Sigmoid colon (tissue), 7 donors: ENCODE measurements at regions of chr3 and their contacts with region 1.

Region 1: DNA sequence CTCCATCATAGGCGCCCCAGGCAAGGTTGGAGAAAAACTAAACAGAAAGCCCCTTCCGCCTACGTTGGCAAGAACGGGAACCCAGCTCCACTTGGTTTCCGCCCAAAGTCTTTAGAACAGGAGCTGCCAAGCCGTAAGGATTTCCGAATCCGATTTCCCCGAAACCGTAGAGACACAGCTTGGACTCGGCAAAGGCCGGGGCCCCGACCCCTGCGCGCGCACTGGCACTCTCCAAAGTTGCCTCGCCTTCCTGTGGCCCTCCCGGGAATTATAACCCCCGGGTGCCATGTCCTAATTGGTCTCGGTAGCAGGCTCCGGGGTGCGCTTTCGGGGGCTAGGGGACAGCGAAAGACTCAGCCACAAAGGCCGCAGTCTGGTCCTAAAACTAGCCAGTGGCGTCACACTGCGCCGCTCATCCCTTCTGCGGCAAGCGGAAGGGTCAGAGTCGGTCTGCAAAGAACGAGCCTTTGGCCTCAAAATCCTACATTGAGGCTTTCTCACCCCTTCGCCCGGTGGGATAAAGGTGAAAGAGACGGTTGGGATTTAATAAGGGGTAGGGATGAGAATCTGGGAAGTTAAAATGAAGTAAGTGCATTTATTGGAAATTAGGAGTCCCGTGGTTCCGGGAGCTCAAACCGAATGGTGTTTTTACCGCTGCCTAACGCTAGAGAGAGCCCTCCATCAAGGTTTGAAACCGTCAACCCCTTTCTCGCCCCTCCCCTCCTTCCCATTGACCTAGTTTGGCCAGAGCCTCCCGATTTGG is 6.8 kb downstream of the BCL6 start:
- DNase-seq: peak; percentile 97
- H3K4me3 ChIP-seq: peak overlapping the region; percentile 53 to 88 (median 68)
- H3K27ac ChIP-seq: peak overlapping the region; percentile 90 to 99 (median 96)
- H3K4me1 ChIP-seq: peaks cover 0 to 76% (median 43%) of the 10 kb centered on the region in 4 donors
- H3K27me3 ChIP-seq: no peaks in the 10 kb centered on the region
- CTCF ChIP-seq: peak; percentile 55 to 72 (median 64)
- EP300 ChIP-seq: peak in 2 of 4 donors; percentile 24 to 45
- POLR2A ChIP-seq: peak; percentile 23 to 34

Region 2: DNA sequence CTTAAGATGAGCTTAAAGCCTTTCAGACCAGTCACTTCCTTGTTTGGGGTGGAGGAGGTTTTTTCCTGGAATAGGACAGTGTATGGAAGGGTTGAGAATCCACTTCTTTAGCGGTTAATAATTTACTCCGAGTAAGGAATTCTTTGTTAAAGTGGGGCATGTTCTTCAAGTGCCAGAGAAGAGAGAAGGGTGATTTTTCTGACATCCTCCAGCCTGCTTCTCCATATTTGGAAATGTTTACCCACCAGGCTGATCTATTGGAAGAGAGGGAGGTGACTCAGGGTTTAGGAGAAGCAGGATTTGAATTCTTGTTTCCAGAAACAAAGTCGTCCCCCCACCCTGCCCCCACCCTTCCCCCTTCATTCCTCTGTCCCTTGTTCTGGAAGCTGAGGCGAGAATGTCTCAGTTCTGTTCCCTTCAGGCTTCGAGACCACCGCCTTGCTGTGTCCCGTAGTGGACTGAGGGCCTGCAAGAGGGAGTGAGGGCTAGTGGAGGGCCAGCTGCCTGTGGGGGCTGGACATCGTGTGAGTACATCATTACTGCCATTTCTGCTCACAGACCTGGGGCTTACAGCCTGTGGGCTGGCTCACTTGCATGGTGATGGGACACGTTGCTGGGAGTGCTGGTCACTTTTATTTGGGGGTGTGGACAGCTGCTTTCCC is 473.9 kb after region 1 on chr3:
- intact Hi-C with region 1: loop called (anchors 2 kb)
- DNase-seq: peak; percentile 83
- H3K4me3 ChIP-seq: peak overlapping the region; percentile 41 to 56 (median 47)
- H3K27ac ChIP-seq: peak overlapping the region; percentile 84 to 97 (median 93)
- H3K4me1 ChIP-seq: peaks cover 0 to 70% (median 54%) of the 10 kb centered on the region in 4 donors
- H3K27me3 ChIP-seq: no peaks in the 10 kb centered on the region
- CTCF ChIP-seq: no peak
- EP300 ChIP-seq: peak; percentile 66 to 92 (median 80)
- POLR2A ChIP-seq: peak; percentile 32 to 51

Region 3: DNA sequence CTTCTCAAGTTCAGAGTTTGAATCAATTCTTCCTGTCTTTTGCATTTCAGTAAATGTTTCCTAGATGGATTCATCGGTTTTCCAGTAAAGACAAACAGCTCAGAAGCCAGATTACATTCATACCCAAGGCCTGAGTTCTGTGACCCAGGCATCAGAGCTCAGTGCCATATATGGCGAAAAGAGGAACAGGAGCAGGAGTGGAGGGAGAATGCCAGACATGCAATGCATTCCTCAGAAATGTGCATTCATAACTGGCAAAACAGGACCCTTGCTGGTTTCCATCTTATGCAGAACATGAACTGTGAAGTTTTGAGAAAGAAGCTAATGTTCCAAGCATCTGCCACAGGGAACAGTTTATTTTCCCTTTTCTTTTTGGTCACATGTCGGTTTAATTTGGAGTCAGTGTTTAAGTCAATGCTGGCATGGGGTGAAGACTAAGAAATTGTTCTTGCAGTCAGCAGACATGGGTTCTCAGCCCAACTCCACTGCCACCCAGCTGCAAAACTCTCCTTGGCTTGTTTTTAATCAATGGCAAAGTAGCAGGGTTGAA is 532.0 kb after region 1 on chr3:
- intact Hi-C with region 1: loop called (anchors 2 kb)
- DNase-seq: no peak
- H3K4me3 ChIP-seq: no peak overlapping the region
- H3K27ac ChIP-seq: peak overlapping the region; percentile 88 to 94 (median 90)
- H3K4me1 ChIP-seq: peaks cover 0 to 97% (median 95%) of the 10 kb centered on the region in 4 donors
- H3K27me3 ChIP-seq: no peaks in the 10 kb centered on the region
- CTCF ChIP-seq: no peak
- EP300 ChIP-seq: peak in 3 of 4 donors; percentile 41 to 93 (median 77)
- POLR2A ChIP-seq: no peak

Region 4: GRCh38 chr3:188780193-188781147 is 1042.0 kb after region 1 on chr3:
- intact Hi-C with region 1: loop called (anchors 5 kb)
- DNase-seq: peak; percentile 74
- H3K4me3 ChIP-seq: no peak overlapping the region
- H3K27ac ChIP-seq: peak overlapping the region; percentile 55 to 77 (median 64)
- H3K4me1 ChIP-seq: peaks cover 0 to 67% (median 51%) of the 10 kb centered on the region in 4 donors
- H3K27me3 ChIP-seq: no peaks in the 10 kb centered on the region
- CTCF ChIP-seq: no peak
- EP300 ChIP-seq: peak; percentile 17 to 86 (median 64)
- POLR2A ChIP-seq: no peak

Region 5: GRCh38 chr3:188863999-188864406 is 1125.5 kb after region 1 on chr3:
- intact Hi-C with region 1: loop called (anchors 10 kb)
- DNase-seq: no peak
- H3K4me3 ChIP-seq: no peak overlapping the region
- H3K27ac ChIP-seq: peak overlapping the region; percentile 15 to 63 (median 39)
- H3K4me1 ChIP-seq: peaks cover 0 to 58% (median 36%) of the 10 kb centered on the region in 4 donors
- H3K27me3 ChIP-seq: no peaks in the 10 kb centered on the region
- CTCF ChIP-seq: no peak
- EP300 ChIP-seq: peak in 1 of 4 donors; percentile 11
- POLR2A ChIP-seq: no peak

Region 6: GRCh38 chr3:188881954-188882641 is 1143.6 kb after region 1 on chr3:
- intact Hi-C with region 1: loop called (anchors 5 kb)
- DNase-seq: no peak
- H3K4me3 ChIP-seq: no peak overlapping the region
- H3K27ac ChIP-seq: peak overlapping the region in 2 of 4 donors; percentile 11 to 30
- H3K4me1 ChIP-seq: peaks cover 0 to 33% (median 11%) of the 10 kb centered on the region in 4 donors
- H3K27me3 ChIP-seq: no peaks in the 10 kb centered on the region
- CTCF ChIP-seq: no peak
- EP300 ChIP-seq: no peak
- POLR2A ChIP-seq: no peak

Region 7: GRCh38 chr3:189148081-189148507 is 1409.6 kb after region 1 on chr3:
- intact Hi-C with region 1: loop called (anchors 2 kb)
- DNase-seq: peak; percentile 82
- H3K4me3 ChIP-seq: no peak overlapping the region
- H3K27ac ChIP-seq: no peak overlapping the region
- H3K4me1 ChIP-seq: peaks cover 0 to 10% (median 4%) of the 10 kb centered on the region in 4 donors
- H3K27me3 ChIP-seq: no peaks in the 10 kb centered on the region
- CTCF ChIP-seq: peak; percentile 32 to 79 (median 76)
- EP300 ChIP-seq: no peak
- POLR2A ChIP-seq: no peak